ENCODE measurements at regions of chr7 and their contacts with region 1.

Region 1: GRCh38 chr7:20219446-20220292 is 2.5 kb upstream of the MACC1 start:
- DNase-seq: no peak

Region 2: DNA sequence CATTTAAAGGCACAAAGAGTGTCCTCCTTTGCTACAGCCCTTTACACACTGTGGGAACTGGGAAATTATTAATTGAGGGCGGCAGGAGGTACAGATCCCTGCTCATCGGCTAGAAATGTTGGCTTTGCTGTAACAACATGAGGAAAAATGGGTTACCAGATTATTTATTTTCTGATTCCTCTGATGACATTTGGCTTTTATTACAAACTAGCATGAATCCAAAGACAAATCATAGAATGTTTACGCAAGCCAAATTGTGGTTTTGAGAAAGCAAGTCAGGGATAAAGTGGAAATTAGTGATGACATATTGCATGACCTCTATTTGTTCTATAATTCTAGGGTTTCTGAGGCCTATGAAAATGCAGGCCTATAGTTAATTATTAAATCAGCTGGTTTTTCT is 320.1 kb before region 1 on chr7:
- in situ Hi-C with region 1: no loop called
- DNase-seq: no peak

Region 3: DNA sequence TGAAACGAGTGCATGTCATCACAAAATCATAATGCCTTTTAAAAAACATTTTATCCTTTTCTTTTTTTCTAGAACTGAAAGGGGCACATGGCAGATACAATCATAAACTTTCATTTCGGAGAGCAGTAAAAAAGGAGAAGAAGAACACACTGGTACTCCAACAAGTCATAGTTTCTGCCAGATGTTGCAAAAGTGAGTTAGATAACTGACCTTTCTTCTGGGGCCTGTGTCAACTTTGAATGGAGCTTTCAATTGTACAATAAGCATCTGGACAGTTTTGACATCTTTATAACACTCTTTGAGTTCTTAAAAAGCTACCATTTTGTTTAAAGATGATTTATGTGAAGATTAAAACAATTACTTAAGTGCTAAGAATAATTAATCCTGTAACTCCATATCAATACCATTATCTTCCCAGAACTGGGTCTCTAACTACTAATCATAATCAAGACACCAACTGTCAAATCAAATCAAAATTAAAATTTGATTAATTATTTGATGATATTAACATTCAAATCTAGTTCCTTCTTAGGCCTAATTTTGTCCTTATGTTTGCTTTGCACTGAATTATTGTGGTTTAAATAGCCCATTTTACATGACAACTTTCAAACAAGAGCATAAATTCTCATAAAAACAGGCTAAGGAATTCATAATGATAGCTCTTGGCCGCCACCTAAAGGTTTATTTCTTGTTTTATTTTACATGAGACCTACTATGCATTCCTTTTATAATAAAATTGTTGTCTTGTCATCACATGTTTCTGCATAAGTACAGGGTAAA is 91.5 kb after region 1 on chr7:
- in situ Hi-C with region 1: loop called (anchors 25 kb)
- DNase-seq: peak; percentile 70

Region 4: GRCh38 chr7:20343205-20343604 is 123.5 kb after region 1 on chr7:
- in situ Hi-C with region 1: no loop called
- DNase-seq: peak; percentile 36

Region 5: GRCh38 chr7:21044384-21044783 is 824.7 kb after region 1 on chr7:
- in situ Hi-C with region 1: no loop called
- DNase-seq: no peak

Measured in ACHN (cell line).